ENCODE measurements at regions of chr17 and their contacts with region 1.

Region 1: DNA sequence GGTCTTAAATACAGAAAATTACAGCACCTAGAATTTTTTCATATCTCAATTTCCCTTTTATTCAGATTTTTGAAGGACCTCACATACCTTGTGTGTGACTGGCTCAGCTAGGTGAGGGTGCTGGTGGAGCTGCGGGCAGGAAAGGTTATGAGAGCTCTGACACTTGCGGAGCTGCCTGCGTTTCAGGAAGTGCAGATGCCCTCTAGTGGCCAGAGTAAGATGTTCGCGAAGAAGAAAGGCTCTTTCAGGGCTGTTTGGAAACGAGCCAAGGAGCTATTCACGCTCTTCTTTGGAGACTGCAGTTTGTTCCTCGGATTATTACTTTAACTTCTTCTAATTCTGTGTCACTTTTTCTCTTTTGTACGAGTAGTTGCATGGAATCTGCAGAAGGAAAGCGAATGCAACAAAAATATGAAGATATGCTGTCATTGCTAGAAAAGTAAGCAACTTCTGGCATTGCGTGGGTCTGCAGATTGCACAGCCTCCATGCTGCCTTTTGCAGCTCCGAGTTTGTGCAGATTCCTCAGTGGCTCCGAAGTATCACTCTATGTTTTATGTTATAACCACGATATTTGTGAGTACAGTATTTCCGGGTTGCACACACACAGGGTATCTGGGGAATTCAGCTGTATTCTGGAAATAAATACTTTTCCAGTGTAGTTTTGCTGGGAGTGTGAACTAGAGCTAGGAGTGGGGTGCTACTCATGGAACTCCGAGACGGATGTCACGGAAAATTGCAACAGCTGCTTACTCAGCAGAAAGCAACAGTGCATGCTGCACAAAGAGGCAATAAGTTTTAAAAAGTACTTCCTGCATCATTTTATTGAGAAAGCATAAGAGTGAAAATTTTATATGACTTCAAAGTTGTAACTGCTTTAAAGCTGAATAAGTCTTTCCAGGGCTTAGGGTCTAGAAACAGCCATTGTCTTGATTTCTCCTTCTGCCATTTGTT is 46.3 kb downstream of the DNAH9 start:
- DNase-seq: peak; percentile 60
- CTCF ChIP-seq: peak; percentile 57

Region 2: DNA sequence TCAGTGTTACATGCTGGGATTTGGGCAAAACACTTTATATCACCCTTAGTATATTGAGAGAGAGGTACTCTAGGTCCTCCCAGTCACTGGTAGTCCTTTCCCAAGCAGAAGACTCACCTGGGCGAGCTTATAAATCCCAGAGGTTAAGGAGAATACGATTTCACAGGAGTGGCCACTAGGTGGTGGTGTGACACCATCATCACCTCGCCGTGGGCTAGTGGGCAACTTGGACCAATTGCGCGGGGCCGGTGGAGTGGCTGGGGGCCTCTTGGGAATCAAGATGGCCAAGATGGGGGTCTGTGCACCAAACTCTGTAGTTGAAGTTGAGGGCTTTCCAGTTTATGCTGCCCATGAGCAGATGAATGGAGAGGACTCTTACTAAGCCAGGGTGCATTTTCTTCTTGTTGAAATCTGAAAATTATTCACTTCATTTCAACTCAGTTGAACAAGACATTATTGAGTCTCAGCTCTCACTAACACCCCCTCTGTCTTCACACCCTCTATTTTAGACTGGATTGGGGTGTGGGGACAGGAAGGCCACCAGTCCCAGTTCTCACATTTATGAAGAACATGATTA is 768.5 kb before region 1 on chr17:
- in situ Hi-C with region 1: loop called (anchors 25 kb)
- DNase-seq: peak; percentile 46
- CTCF ChIP-seq: peak; percentile 43

Region 3: DNA sequence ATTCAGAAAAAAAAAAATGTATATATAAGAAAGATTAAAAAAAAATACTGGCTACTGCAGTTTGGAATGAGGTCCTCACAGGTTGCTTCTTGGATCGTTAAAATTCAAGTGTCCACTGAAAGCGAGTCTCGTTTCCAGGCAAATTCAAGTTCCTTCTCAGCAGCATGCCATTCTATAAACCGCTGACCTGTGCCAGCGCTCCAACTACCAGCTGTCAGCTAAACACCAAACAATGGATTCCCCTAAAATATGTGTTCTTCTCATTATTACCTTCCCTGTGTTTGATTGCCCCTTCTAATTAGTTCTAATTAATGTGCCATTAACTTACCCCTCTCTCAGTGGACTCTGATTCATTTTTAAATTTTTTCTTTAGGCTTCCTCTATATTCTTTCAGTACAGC is 46.1 kb after region 1 on chr17:
- in situ Hi-C with region 1: no loop called
- DNase-seq: no peak
- CTCF ChIP-seq: no peak